HepG2 (cell line): ENCODE measurements at regions of chr4 and their contacts with region 1.

Region 1: GRCh38 chr4:143224255-143224654 is 39.5 kb downstream of the USP38 start:
- DNase-seq: no peak
- ATAC-seq: no peak
- H3K4me3 ChIP-seq: peak overlapping the region in 2 of 3 experiments; percentile 19 to 23; a peak in 1 of 6 replicates
- H3K27ac ChIP-seq: peak overlapping the region; percentile 68
- H3K4me1 ChIP-seq: peaks cover 31% of the 10 kb centered on the region
- H3K27me3 ChIP-seq: no peaks in the 10 kb centered on the region
- CTCF ChIP-seq: no peak
- EP300 ChIP-seq: no peak
- POLR2A ChIP-seq: no peak
- RAD21 ChIP-seq: no peak

Region 2: DNA sequence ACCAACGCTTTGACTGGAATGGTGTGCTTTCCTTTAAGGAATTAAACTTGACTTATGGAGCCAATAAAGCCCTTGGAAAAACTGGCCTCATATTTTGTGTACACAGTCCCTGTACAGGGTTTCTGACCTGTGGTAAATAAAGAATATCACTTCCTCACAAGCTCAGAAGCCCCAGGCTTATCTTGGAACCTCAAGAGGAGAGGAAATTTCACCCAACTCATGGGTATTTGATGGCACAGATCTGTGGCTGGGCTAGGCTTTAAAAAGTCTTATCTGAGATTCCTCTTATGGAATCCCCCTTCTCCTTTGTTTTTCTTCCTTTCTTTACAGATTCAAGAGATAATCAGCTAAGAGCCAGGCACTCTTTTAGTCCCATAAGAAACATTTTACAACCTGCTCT is 128.8 kb before region 1 on chr4:
- CTCF ChIA-PET with region 1: no interaction called
- POLR2A ChIA-PET with region 1: no interaction called
- in situ Hi-C with region 1: no loop called
- intact Hi-C with region 1: no loop called
- DNase-seq: no peak
- ATAC-seq: no peak
- H3K4me3 ChIP-seq: no peak overlapping the region
- H3K27ac ChIP-seq: no peak overlapping the region
- H3K4me1 ChIP-seq: no peaks in the 10 kb centered on the region
- H3K27me3 ChIP-seq: no peaks in the 10 kb centered on the region
- CTCF ChIP-seq: no peak
- EP300 ChIP-seq: no peak
- POLR2A ChIP-seq: no peak
- RAD21 ChIP-seq: no peak

Region 3: DNA sequence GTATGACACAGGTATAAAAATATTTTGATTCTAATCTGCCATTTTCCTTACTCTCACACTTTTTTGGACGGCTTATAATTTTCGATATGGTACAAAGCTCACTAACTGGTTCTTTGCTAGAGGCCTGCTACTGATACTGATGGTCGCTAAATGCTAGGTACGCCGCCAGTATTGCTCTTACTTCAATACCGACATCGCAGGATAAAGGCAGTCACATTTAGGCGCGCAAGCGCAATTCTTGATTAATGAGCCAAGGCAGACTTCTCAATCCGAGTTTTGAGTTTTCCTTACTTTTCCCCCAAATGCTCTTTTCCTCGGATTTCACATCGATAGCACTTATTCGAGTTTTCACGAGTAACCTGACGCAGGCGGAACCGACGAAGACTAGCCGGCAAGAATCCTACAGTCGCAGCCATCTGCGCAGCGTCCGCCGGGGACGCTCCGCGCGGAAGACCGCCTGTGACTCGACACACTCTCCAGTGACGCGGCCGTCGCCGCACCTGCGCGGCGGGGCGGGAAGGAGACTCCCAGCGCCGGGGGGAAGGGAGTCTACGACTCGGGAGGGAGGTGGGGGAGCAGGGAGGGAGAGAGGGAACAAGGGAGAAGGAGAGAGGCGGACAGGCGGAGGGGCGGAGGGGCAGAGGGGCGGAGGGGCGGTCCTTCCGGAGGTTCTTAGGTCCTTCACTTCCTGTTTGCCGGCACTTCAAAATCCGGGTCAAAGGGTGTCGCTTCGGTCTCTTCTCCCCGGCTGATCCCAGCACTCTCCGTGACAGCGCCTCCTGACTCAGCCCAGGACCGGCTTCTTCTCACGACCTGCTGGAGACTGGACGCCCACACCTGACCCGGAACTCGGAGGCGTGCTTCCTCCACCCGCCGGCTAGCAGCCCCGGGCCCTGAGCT is 39.8 kb before region 1 on chr4 and contains the start of gene USP38:
- CTCF ChIA-PET with region 1: no interaction called
- POLR2A ChIA-PET with region 1: interaction called, 5 read pairs
- in situ Hi-C with region 1: no loop called
- intact Hi-C with region 1: loop called (anchors 5 kb)
- DNase-seq: peak; percentile 91
- ATAC-seq: peak; percentile 94
- H3K4me3 ChIP-seq: peak within 1 kb of the TSS; percentile 83 to 100 (median 96)
- H3K27ac ChIP-seq: peak within 1 kb of the TSS; percentile 88
- H3K4me1 ChIP-seq: peaks cover 31% of the 10 kb centered on the region
- H3K27me3 ChIP-seq: no peaks in the 10 kb centered on the region; a peak in 1 of 5 replicates
- CTCF ChIP-seq: no peak; the same call in 1 of the 2 replicates
- EP300 ChIP-seq: no peak; a peak in 1 of 4 replicates
- POLR2A ChIP-seq: peak; percentile 82 to 93
- RAD21 ChIP-seq: no peak
- total RNA-seq, gene USP38: 11.8 and 15.5 TPM in 2 replicates

Region 4: DNA sequence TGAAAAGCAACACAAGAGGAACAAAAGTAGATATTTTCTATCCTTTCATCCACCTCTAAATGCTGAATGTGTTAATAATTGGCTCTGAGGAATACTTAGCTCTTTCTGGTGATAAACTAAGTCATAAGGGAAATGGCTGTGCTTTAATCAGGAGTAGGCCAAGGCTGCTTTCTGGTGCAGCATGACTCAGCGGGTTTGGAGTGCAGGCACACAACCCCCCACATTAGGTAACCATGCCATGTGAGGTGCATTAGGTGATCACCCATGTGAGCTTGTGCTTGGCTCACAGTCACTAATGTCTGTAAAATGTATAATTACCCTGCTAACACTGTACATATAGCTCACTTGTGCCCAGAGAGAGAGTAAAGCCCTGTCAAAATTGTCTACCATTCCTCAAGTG is 17.6 kb after region 1 on chr4:
- CTCF ChIA-PET with region 1: no interaction called
- POLR2A ChIA-PET with region 1: interaction called, 11 read pairs
- in situ Hi-C with region 1: no loop called
- intact Hi-C with region 1: loop called (anchors 2 kb)
- DNase-seq: peak; percentile 24
- ATAC-seq: no peak
- H3K4me3 ChIP-seq: no peak overlapping the region
- H3K27ac ChIP-seq: no peak overlapping the region
- H3K4me1 ChIP-seq: peaks cover 21% of the 10 kb centered on the region
- H3K27me3 ChIP-seq: no peaks in the 10 kb centered on the region
- CTCF ChIP-seq: no peak
- EP300 ChIP-seq: no peak
- POLR2A ChIP-seq: no peak
- RAD21 ChIP-seq: no peak